Prostate gland (tissue), 2 donors: ENCODE measurements at regions of chr6 and their contacts with region 1.

Region 1: GRCh38 chr6:136547336-136547735 is 2.9 kb downstream of the MAP7 start:
- DNase-seq: no peak
- H3K4me3 ChIP-seq: no peak overlapping the region
- H3K27ac ChIP-seq: no peak overlapping the region
- H3K4me1 ChIP-seq: no peaks in the 10 kb centered on the region
- H3K27me3 ChIP-seq: no peaks in the 10 kb centered on the region
- CTCF ChIP-seq: peak in 3 of 4 experiments; percentile 25 to 68 (median 67)
- POLR2A ChIP-seq: no peak

Region 2: DNA sequence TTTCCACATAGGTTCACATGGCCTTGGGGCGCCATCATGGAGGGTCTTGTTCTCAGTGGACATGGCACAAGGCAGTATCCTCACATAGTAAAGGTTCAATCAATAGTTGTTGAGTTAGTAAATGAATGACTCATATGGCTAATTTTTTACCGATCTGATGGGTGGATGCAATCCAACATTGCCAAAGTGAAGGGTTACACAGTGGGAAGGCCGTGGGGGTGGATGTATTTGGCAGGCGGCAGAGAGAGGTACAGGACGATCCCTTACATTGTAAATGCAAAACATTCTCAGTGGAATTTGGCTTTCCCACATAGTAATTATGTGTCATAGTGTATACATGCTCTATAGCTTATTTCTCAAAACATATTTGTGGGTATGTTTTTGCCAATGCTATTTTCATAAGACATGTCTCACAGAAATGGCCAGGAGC is 716.9 kb before region 1 on chr6:
- intact Hi-C with region 1: no loop called
- DNase-seq: no peak
- H3K4me3 ChIP-seq: no peak overlapping the region
- H3K27ac ChIP-seq: no peak overlapping the region
- H3K4me1 ChIP-seq: no peaks in the 10 kb centered on the region
- H3K27me3 ChIP-seq: no peaks in the 10 kb centered on the region
- CTCF ChIP-seq: no peak
- POLR2A ChIP-seq: no peak

Region 3: GRCh38 chr6:136326038-136326553 is 221.2 kb before region 1 on chr6:
- intact Hi-C with region 1: loop called (anchors 10 kb)
- DNase-seq: peak; percentile 51
- H3K4me3 ChIP-seq: no peak overlapping the region
- H3K27ac ChIP-seq: peak overlapping the region; percentile 25 to 47
- H3K4me1 ChIP-seq: peaks cover 3% of the 10 kb centered on the region
- H3K27me3 ChIP-seq: no peaks in the 10 kb centered on the region
- CTCF ChIP-seq: no peak
- POLR2A ChIP-seq: no peak

Region 4: GRCh38 chr6:136501514-136501913 is 45.8 kb before region 1 on chr6:
- intact Hi-C with region 1: no loop called
- DNase-seq: no peak
- H3K4me3 ChIP-seq: no peak overlapping the region
- H3K27ac ChIP-seq: no peak overlapping the region
- H3K4me1 ChIP-seq: no peaks in the 10 kb centered on the region
- H3K27me3 ChIP-seq: no peaks in the 10 kb centered on the region
- CTCF ChIP-seq: no peak
- POLR2A ChIP-seq: no peak

Region 5: DNA sequence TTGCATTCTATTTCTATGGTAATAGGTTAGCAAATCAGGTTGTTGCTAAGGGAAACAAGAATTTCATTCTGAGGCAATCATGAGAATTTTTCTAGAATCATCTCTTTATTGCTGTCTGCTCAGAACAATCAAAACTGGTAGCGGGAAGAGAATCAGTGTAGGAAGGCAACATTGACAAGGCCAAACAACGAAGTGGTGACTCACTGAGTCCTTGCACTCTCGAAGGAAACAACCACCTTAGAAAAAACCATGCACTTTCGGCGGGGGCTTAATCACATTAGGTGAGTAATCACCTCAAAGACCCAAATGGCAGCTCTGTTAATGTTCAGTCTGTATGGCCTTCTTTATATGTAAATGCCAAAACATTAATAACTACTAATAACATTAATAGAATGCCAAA is 81.7 kb after region 1 on chr6:
- intact Hi-C with region 1: no loop called
- DNase-seq: no peak
- H3K4me3 ChIP-seq: no peak overlapping the region
- H3K27ac ChIP-seq: no peak overlapping the region
- H3K4me1 ChIP-seq: no peaks in the 10 kb centered on the region
- H3K27me3 ChIP-seq: no peaks in the 10 kb centered on the region
- CTCF ChIP-seq: no peak
- POLR2A ChIP-seq: no peak

Region 6: DNA sequence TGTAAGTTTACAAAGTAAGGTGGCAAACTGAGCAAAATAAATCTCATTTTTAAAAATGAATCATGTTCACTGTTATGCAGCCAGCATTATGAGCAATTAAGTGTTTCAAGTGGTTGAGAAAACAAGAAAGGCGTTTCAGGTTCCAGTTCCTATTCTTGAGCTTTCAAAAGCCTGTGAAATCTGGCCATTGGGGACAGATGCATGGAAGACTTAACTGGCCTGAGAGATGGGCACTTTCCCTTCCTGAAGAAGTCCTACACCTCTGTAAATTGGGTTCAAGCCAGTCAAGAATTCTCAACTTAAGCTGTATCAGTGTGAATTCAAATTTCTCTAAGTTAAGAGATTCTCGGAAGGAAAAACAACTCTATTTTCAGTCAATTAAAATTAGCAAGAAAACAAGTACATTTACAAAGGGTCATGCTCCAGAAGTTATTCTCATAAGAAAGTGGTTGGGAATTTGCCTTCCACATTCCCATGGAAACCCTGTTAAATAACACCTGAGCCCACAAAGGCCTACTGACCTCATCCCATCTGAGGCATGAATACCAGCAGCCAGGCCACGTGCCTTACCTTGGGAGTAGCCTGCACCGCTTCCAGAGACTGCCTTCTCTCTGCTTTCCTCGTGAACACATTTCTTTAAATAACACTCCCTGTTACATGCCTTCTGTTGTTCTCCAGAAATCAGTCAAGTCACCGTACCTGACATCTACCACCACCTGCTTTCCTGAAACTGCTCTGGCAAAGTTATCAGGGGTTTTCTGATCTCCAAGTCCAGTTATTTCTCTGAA is 225.5 kb after region 1 on chr6:
- intact Hi-C with region 1: no loop called
- DNase-seq: no peak
- H3K4me3 ChIP-seq: no peak overlapping the region
- H3K27ac ChIP-seq: no peak overlapping the region
- H3K4me1 ChIP-seq: no peaks in the 10 kb centered on the region
- H3K27me3 ChIP-seq: no peaks in the 10 kb centered on the region
- CTCF ChIP-seq: no peak
- POLR2A ChIP-seq: no peak